ENCODE measurements at regions of chr1 and their contacts with region 1.

Region 1: GRCh38 chr1:228263636-228264035 is 55.8 kb downstream of the OBSCN start:
- DNase-seq: no peak
- H3K4me3 ChIP-seq: no peak overlapping the region
- H3K4me3 Mint-ChIP-seq: no peak overlapping the region
- H3K27ac ChIP-seq: no peak overlapping the region
- H3K27ac Mint-ChIP-seq: no peak overlapping the region
- H3K4me1 ChIP-seq: no peaks in the 10 kb centered on the region
- H3K4me1 Mint-ChIP-seq: no peaks in the 10 kb centered on the region
- H3K27me3 ChIP-seq: no peaks in the 10 kb centered on the region
- H3K27me3 Mint-ChIP-seq: no peaks in the 10 kb centered on the region

Region 2: GRCh38 chr1:228245111-228245510 is 18.5 kb before region 1 on chr1:
- CTCF ChIA-PET with region 1: interaction called, 3 read pairs
- POLR2A ChIA-PET with region 1: no interaction called
- intact Hi-C with region 1: loop called (anchors 2 kb)
- DNase-seq: no peak
- H3K4me3 ChIP-seq: no peak overlapping the region
- H3K4me3 Mint-ChIP-seq: peak overlapping the region in 2 of 8 donors; percentile 67 to 71
- H3K27ac ChIP-seq: no peak overlapping the region
- H3K27ac Mint-ChIP-seq: no peak overlapping the region
- H3K4me1 ChIP-seq: no peaks in the 10 kb centered on the region
- H3K4me1 Mint-ChIP-seq: peaks cover 7 to 22% (median 8%) of the 10 kb centered on the region in 4 donors
- H3K27me3 ChIP-seq: no peaks in the 10 kb centered on the region
- H3K27me3 Mint-ChIP-seq: no peaks in the 10 kb centered on the region

Region 3: DNA sequence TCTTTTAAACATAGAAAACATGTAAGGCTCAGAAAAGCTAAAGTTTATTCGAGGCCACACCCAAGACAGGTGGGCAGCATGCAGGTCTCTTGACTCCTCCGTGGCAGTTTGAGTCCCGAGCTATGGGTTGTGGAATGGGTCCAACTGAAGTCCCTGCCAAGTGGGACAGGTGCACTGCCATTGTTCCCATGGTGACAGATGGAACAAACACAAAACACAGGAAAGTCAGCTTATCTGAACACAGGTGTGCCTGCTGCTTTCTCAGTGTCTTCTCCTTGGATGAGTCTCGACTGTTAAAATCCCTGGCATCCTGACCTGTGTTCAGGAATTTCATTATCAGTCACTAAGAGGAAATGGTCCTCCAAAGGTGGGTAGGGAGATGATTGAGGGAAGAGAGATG is 908.3 kb after region 1 on chr1:
- CTCF ChIA-PET with region 1: no interaction called
- POLR2A ChIA-PET with region 1: no interaction called
- intact Hi-C with region 1: no loop called
- DNase-seq: no peak
- H3K4me3 ChIP-seq: no peak overlapping the region
- H3K4me3 Mint-ChIP-seq: no peak overlapping the region
- H3K27ac ChIP-seq: no peak overlapping the region
- H3K27ac Mint-ChIP-seq: no peak overlapping the region
- H3K4me1 ChIP-seq: no peaks in the 10 kb centered on the region
- H3K4me1 Mint-ChIP-seq: peaks cover 0 to 3% (median under 1%) of the 10 kb centered on the region in 4 donors
- H3K27me3 ChIP-seq: no peaks in the 10 kb centered on the region
- H3K27me3 Mint-ChIP-seq: peaks cover 1 to 6% of the 10 kb centered on the region in 2 donors

Measured in CD4-positive, alpha-beta memory T cell (primary cell).